Stomach (tissue), 19 donors: ENCODE measurements at regions of chr2 and their contacts with region 1.

Region 1: DNA sequence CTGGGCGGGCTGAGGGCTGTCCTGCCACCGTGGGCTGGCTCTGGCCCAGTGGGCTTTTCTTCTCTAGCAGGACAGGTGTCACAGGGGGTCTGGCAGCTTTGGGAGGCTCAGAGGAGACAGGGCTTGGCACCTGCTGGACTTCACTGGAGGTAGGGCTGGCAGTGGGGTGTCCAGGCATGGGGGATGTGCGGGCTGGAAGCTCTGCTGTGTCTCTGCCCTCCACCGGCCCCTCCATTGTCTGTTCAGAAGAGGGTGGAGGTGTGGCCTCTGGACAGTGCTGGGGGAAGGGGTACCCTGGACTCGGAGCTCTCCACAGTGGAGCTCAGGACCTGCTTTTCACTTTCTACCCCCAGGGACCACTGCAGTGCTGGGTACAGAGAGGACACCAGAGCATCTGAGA is 9.2 kb downstream of the PTPRN start:
- DNase-seq: no peak
- H3K4me3 ChIP-seq: no peak overlapping the region
- H3K27ac ChIP-seq: no peak overlapping the region
- H3K4me1 ChIP-seq: peaks cover 0 to 12% (median 8%) of the 10 kb centered on the region in 4 donors
- H3K27me3 ChIP-seq: peaks cover 0 to 49% (median 18%) of the 10 kb centered on the region in 3 donors
- CTCF ChIP-seq: no peak
- EP300 ChIP-seq: no peak
- POLR2A ChIP-seq: no peak

Region 2: GRCh38 chr2:219160186-219161017 is 139.6 kb before region 1 on chr2 and contains the start of gene NHEJ1:
- intact Hi-C with region 1: loop called (anchors 5 kb)
- DNase-seq: peak; percentile 97 to 99
- H3K4me3 ChIP-seq: peak within 1 kb of the TSS; percentile 53 to 81 (median 68)
- H3K27ac ChIP-seq: peak within 1 kb of the TSS; percentile 90 to 99 (median 96)
- H3K4me1 ChIP-seq: peaks cover 4 to 19% (median 16%) of the 10 kb centered on the region in 4 donors
- H3K27me3 ChIP-seq: no peaks in the 10 kb centered on the region
- CTCF ChIP-seq: peak in 5 of 7 experiments; percentile 96 to 99 (median 98)
- EP300 ChIP-seq: no peak
- POLR2A ChIP-seq: no peak
- total RNA-seq, gene NHEJ1: 4.5 to 25.5 (median 13.2) TPM

Region 3: GRCh38 chr2:219230059-219230540 is 69.9 kb before region 1 on chr2:
- intact Hi-C with region 1: no loop called
- DNase-seq: peak; percentile 73 to 87
- H3K4me3 ChIP-seq: peak overlapping the region; percentile 64 to 82 (median 78)
- H3K27ac ChIP-seq: peak overlapping the region; percentile 95 to 98 (median 96)
- H3K4me1 ChIP-seq: peaks cover 19 to 57% (median 38%) of the 10 kb centered on the region in 4 donors
- H3K27me3 ChIP-seq: no peaks in the 10 kb centered on the region
- CTCF ChIP-seq: no peak
- EP300 ChIP-seq: no peak
- POLR2A ChIP-seq: no peak

Region 4: DNA sequence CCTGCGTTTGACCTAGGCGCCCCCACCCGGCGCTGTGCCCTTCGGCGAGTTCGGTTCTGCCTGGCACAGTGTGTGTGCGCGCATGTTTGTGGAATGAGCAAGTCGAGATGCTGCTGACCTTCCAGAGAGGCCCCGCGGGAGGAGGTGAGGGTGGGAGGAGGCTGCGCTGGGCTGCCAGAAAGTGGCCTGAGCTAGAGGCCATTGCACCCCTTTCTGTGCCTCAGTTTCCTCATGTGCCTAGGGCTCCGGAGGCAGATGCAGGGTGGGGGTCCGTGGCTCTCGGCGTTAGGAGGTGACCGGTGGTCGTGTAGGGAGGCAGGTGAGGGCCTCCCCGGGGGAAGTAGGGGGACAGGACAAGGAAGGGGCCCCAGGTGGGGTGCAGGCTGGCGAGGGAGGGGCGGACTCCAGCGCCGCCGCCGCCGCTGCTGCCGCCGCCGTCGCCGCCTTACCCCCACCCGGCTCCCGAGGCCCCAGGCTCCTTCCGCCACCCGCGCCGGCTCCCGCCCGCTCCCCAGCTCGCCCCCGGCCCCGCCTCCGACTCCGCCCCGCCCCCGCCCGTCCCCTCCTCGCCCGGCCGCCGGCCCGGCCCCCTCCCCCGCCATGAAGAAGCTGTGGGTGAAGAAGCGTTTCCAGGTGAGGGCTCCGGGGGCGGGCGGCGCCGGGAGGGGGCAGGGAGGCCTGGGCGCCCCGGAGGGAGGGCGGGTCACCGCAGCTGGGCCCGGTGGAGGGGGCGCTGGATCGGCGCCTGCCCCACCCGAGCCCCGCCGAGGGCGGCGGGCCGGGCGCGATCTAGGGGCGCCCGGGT is 141.6 kb after region 1 on chr2:
- intact Hi-C with region 1: no loop called
- DNase-seq: peak; percentile 53 to 86
- H3K4me3 ChIP-seq: peak overlapping the region; percentile 64 to 80 (median 71)
- H3K27ac ChIP-seq: peak overlapping the region; percentile 34 to 95 (median 82)
- H3K4me1 ChIP-seq: peaks cover 15 to 39% (median 25%) of the 10 kb centered on the region in 4 donors
- H3K27me3 ChIP-seq: peaks cover 0 to 80% (median 31%) of the 10 kb centered on the region in 3 donors
- CTCF ChIP-seq: no peak
- EP300 ChIP-seq: no peak
- POLR2A ChIP-seq: no peak